Gastrocnemius medialis (tissue), 4 donors: ENCODE measurements at regions of chr17 and their contacts with region 1.

Region 1: GRCh38 chr17:70447588-70447987 is 278.3 kb downstream of the KCNJ2 start:
- DNase-seq: no peak
- ATAC-seq: no peak
- H3K4me3 ChIP-seq: no peak overlapping the region
- H3K27ac ChIP-seq: no peak overlapping the region
- H3K4me1 ChIP-seq: no peaks in the 10 kb centered on the region
- H3K27me3 ChIP-seq: no peaks in the 10 kb centered on the region
- CTCF ChIP-seq: no peak
- POLR2A ChIP-seq: no peak

Region 2: GRCh38 chr17:70882504-70882903 is 434.9 kb after region 1 on chr17:
- in situ Hi-C with region 1: no loop called
- intact Hi-C with region 1: loop called (anchors 10 kb)
- DNase-seq: no peak
- ATAC-seq: no peak
- H3K4me3 ChIP-seq: no peak overlapping the region
- H3K27ac ChIP-seq: no peak overlapping the region
- H3K4me1 ChIP-seq: no peaks in the 10 kb centered on the region
- H3K27me3 ChIP-seq: no peaks in the 10 kb centered on the region
- CTCF ChIP-seq: no peak
- POLR2A ChIP-seq: no peak